Right ventricle myocardium inferior (tissue), 1 donor: ENCODE measurements at regions of chr1 and their contacts with region 1.

Region 1: GRCh38 chr1:236685917-236686814 is at the start of gene ACTN2:
- DNase-seq: peak; percentile 85
- ATAC-seq: peak; percentile 64
- total RNA-seq, gene ACTN2: 2,525 TPM

Region 2: GRCh38 chr1:236603991-236604904 is 81.9 kb before region 1 on chr1 and contains the start of gene HEATR1:
- intact Hi-C with region 1: loop called (anchors 2 kb)
- DNase-seq: peak; percentile 95
- ATAC-seq: peak; percentile 97
- total RNA-seq, gene HEATR1: 9.6 TPM

Region 3: DNA sequence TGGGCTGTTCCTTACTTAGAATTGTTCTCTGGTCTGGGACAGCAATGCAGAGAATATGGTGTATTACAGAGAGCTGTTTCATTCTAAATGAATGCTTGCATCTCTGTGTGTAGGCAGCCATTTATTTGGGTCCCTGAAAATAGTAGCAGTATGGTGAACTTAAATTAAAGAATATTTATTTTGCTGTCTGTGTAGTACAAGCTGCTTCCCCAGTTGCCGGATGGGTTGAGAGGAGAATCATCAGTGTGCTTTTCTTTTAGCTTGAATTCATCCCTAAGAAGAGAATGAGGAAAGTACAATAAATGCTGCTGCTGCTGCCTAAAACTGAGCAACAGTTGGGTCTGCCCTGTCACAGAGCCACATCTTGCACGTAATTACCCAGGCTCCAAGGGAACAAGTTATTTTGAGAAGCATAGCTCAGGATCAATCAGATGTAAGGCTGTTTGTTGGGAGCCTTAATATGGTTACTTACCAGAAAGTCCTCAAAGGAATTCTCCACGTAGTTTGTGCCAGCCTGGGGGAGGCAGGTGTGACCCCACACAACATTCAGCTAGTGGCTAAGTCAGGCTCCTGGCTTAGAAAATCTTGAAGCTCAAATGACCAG is 16.7 kb after region 1 on chr1:
- intact Hi-C with region 1: loop called (anchors 2 kb)
- DNase-seq: no peak
- ATAC-seq: no peak

Region 4: GRCh38 chr1:236734141-236734765 is 48.1 kb after region 1 on chr1:
- intact Hi-C with region 1: loop called (anchors 5 kb)
- DNase-seq: no peak
- ATAC-seq: peak; percentile 36

Region 5: GRCh38 chr1:236746785-236747184 is 60.6 kb after region 1 on chr1:
- intact Hi-C with region 1: loop called (anchors 2 kb)
- DNase-seq: no peak
- ATAC-seq: peak; percentile 80

Region 6: GRCh38 chr1:236966636-236967035 is 280.5 kb after region 1 on chr1:
- intact Hi-C with region 1: no loop called
- DNase-seq: no peak
- ATAC-seq: no peak

Region 7: GRCh38 chr1:237205400-237206064 is 519.4 kb after region 1 on chr1:
- intact Hi-C with region 1: no loop called
- DNase-seq: peak; percentile 86
- ATAC-seq: peak; percentile 61